Vagina (tissue), 2 donors: ENCODE measurements at regions of chr12 and their contacts with region 1.

Region 1: GRCh38 chr12:76621582-76622024 is 62.0 kb upstream of the OSBPL8 start:
- DNase-seq: no peak
- H3K4me3 ChIP-seq: no peak overlapping the region
- H3K27ac ChIP-seq: no peak overlapping the region
- H3K4me1 ChIP-seq: no peaks in the 10 kb centered on the region
- H3K27me3 ChIP-seq: no peaks in the 10 kb centered on the region
- CTCF ChIP-seq: peak; percentile 86 to 98 (median 91)
- POLR2A ChIP-seq: no peak

Region 2: GRCh38 chr12:76519538-76519937 is 102.1 kb before region 1 on chr12:
- intact Hi-C with region 1: no loop called
- DNase-seq: no peak
- H3K4me3 ChIP-seq: no peak overlapping the region
- H3K27ac ChIP-seq: no peak overlapping the region
- H3K4me1 ChIP-seq: no peaks in the 10 kb centered on the region
- H3K27me3 ChIP-seq: no peaks in the 10 kb centered on the region
- CTCF ChIP-seq: no peak
- POLR2A ChIP-seq: no peak

Region 3: DNA sequence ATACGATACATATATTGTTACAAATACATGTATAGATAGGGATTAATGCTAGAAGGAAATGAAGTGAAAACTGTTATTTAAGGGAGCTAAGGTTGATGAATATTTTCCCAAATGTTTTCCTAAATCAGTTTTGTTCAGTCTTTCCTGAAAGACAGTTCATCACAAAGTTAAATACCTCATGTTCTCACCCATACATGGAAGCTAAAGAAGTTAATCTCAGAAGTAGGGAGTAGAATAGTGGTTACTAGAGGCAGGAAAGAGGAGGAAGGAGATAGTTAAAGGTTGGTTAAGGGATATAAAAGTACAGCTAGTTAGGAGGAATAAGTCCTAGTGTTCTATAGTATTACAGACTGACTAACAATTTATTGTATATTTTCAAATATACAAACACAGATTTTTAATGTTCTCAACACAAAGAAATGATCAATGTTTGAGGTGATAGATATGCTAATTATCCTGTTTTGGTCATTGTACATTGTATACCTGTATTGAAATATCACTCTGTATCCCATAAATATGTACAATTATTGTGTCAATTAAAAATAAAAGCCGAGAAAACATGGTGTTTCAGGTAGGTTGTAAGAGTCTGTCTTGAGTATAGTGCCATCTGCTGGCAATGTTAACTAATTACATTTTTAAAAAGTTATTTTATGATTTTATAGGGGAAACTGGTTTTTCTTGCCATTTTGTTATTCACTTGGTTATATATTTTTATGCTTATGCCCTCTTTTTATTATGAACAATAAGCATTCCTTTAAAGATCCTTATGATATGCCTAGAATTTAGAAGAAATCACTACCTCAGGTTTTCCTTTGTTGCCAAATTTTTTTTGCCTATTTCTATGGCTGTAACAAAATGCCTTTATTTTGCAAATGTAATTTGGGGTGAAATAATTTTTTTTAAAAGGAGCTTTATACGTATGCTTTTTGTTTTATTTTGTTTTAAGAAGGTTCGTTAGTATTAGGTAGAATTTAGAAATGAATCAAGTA is 169.3 kb after region 1 on chr12:
- intact Hi-C with region 1: loop called (anchors 5 kb)
- DNase-seq: no peak
- H3K4me3 ChIP-seq: no peak overlapping the region
- H3K27ac ChIP-seq: no peak overlapping the region
- H3K4me1 ChIP-seq: peaks cover 24% of the 10 kb centered on the region
- H3K27me3 ChIP-seq: no peaks in the 10 kb centered on the region
- CTCF ChIP-seq: peak; percentile 64 to 81 (median 75)
- POLR2A ChIP-seq: no peak